H1 (cell line): ENCODE measurements at regions of chr14 and their contacts with region 1.

Region 1: GRCh38 chr14:88588081-88588480 is 25.2 kb downstream of the ZC3H14 start:
- DNase-seq: no peak
- H3K4me3 ChIP-seq: no peak overlapping the region
- H3K27ac ChIP-seq: no peak overlapping the region
- H3K4me1 ChIP-seq: no peaks in the 10 kb centered on the region
- H3K27me3 ChIP-seq: no peaks in the 10 kb centered on the region
- CTCF ChIP-seq: no peak
- EP300 ChIP-seq: no peak
- POLR2A ChIP-seq: no peak
- RAD21 ChIP-seq: no peak

Region 2: DNA sequence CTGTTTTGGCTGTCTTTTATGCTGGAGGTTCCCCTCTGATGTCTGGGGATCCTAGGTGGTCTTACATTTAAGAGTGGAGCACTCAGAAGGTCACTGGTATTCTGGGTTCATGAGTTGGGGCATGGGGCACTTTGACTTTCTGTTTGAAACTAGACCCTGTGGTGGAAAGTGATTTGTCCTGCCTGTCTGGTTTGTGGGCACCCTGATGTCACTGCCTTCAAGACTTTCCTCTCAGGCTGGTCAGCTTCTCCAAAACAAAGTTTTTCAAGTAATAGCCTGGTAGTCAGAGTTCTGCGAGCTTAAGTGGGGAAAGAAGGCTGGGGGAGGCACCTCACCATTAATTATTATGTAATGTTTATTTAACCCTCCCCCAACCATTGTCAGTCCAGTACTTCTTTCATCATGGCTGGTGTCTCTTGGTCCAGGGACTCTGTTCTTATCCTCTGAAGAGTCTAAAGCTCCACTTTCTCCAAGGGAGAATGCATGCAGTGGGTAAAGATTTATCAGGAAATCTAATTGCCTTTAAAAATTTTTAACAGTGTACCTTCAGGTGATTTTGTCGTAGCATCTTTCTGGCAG is 10.1 kb after region 1 on chr14:
- CTCF ChIA-PET with region 1: interaction called, 3 read pairs
- POLR2A ChIA-PET with region 1: interaction called, 11 read pairs
- DNase-seq: no peak
- H3K4me3 ChIP-seq: no peak overlapping the region
- H3K27ac ChIP-seq: no peak overlapping the region
- H3K4me1 ChIP-seq: no peaks in the 10 kb centered on the region
- H3K27me3 ChIP-seq: no peaks in the 10 kb centered on the region
- CTCF ChIP-seq: no peak
- EP300 ChIP-seq: no peak
- POLR2A ChIP-seq: no peak
- RAD21 ChIP-seq: no peak

Region 3: GRCh38 chr14:88639221-88639620 is 51.1 kb after region 1 on chr14:
- CTCF ChIA-PET with region 1: no interaction called
- POLR2A ChIA-PET with region 1: no interaction called
- DNase-seq: no peak
- H3K4me3 ChIP-seq: no peak overlapping the region
- H3K27ac ChIP-seq: no peak overlapping the region
- H3K4me1 ChIP-seq: no peaks in the 10 kb centered on the region
- H3K27me3 ChIP-seq: no peaks in the 10 kb centered on the region
- CTCF ChIP-seq: no peak
- EP300 ChIP-seq: no peak
- POLR2A ChIP-seq: no peak
- RAD21 ChIP-seq: no peak